ENCODE measurements at regions of chr6 and their contacts with region 1.

Region 1: GRCh38 chr6:21507811-21508210 is 85.7 kb upstream of the SOX4 start:
- DNase-seq: no peak
- H3K27ac ChIP-seq: no peak overlapping the region
- CTCF ChIP-seq: no peak

Region 2: DNA sequence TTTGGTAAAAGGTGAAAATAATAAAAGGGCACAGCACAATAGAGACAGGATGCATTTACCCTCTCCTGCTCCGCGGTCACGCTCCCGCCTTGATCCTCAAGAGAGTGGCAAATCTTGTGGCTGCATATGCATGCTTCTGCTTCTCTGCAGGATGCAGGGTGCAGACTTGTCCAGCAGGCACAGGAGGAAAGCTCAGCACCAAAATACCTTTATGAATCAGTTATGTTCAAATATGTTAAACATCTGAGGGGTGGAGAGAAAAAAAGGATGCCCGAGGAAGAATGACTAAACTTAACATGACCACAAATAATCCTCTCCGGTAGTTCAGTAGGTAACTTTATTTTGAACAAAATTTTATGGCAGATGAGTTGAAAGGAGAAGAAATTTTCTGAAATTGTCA is 280.3 kb before region 1 on chr6:
- CTCF ChIA-PET with region 1: no interaction called
- POLR2A ChIA-PET with region 1: interaction called, 15 read pairs
- DNase-seq: peak; percentile 78
- H3K27ac ChIP-seq: no peak overlapping the region
- CTCF ChIP-seq: no peak